ENCODE measurements at regions of chr17 and their contacts with region 1.

Region 1: DNA sequence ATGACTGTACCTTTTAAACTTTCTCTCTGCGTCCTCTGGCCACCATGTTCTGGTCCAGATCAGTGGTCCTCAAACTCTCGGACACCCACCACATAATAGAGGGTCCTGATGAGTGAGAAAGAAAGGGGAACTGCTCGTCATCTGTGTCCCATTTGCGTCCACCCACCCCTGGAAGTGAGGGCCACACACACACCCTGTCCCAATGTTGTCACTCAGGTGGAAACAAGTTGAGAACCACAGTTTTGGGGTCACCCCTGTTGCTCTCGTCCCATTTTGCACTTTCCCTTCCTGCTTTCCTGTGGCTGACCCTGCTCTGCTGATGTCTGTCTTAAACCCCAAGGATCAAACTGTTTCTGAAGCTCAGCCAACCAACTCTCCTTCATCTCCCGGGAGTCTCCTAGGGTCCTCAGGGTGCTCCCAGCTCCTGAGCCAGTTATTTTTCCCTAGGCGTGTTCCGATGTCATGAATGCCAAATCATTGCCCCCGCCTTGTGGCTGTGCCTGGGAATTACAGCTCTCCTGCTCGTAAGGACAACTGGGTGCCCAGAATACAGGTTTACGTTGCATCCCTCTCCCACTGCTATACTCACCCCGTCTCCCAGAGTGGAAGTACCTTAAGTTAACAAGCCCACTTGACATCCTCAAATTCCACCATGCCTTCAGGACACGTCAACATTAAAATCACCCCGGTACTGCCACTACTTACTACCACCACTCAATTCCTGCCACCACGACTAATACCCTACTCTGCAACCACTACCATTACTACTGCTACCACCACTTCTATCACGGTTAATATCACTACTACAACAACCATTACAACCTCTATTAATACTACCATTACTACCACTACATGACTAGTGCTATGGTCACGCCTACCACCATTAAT is 26.0 kb upstream of the HNF1B start:
- DNase-seq: peak; percentile 79 to 82
- ATAC-seq: peak; percentile 89 to 92
- H3K4me3 ChIP-seq: no peak overlapping the region
- H3K27ac ChIP-seq: peak overlapping the region; percentile 32 to 56; a peak in 5 of 6 replicates
- H3K4me1 ChIP-seq: peaks cover 4% of the 10 kb centered on the region; the same call in 2 of the 3 replicates
- CTCF ChIP-seq: peak; percentile 87
- EP300 ChIP-seq: no peak
- POLR2A ChIP-seq: no peak
- RAD21 ChIP-seq: peak; percentile 93 to 97

Region 2: GRCh38 chr17:37339321-37339720 is 431.6 kb before region 1 on chr17:
- CTCF ChIA-PET with region 1: no interaction called
- POLR2A ChIA-PET with region 1: no interaction called
- DNase-seq: no peak
- ATAC-seq: peak; percentile 40 to 47; a peak in 3 of 6 replicates
- H3K4me3 ChIP-seq: no peak overlapping the region
- H3K27ac ChIP-seq: no peak overlapping the region; a peak in 1 of 6 replicates
- H3K4me1 ChIP-seq: peaks cover 17% of the 10 kb centered on the region
- CTCF ChIP-seq: no peak
- EP300 ChIP-seq: no peak
- POLR2A ChIP-seq: no peak
- RAD21 ChIP-seq: no peak

Region 3: GRCh38 chr17:37701496-37701898 is 69.4 kb before region 1 on chr17:
- CTCF ChIA-PET with region 1: interaction called, 45 read pairs
- POLR2A ChIA-PET with region 1: no interaction called
- DNase-seq: peak; percentile 50 to 75
- ATAC-seq: peak; percentile 67 to 84; a peak in 5 of 6 replicates
- H3K4me3 ChIP-seq: no peak overlapping the region
- H3K27ac ChIP-seq: peak overlapping the region; percentile 72 to 78
- H3K4me1 ChIP-seq: peaks cover 48% of the 10 kb centered on the region
- CTCF ChIP-seq: peak; percentile 94
- EP300 ChIP-seq: no peak
- POLR2A ChIP-seq: no peak
- RAD21 ChIP-seq: peak; percentile 82 to 85

Region 4: GRCh38 chr17:37737081-37737480 is 33.8 kb before region 1 on chr17:
- CTCF ChIA-PET with region 1: interaction called, 20 read pairs
- POLR2A ChIA-PET with region 1: no interaction called
- DNase-seq: peak; percentile 41 to 73
- ATAC-seq: peak; percentile 38 to 52; a peak in 3 of 6 replicates
- H3K4me3 ChIP-seq: no peak overlapping the region
- H3K27ac ChIP-seq: peak overlapping the region in 1 of 2 experiments; percentile 37; a peak in 2 of 6 replicates
- H3K4me1 ChIP-seq: peaks cover 44% of the 10 kb centered on the region
- CTCF ChIP-seq: peak; percentile 65
- EP300 ChIP-seq: no peak
- POLR2A ChIP-seq: no peak
- RAD21 ChIP-seq: peak; percentile 63 to 73

Region 5: DNA sequence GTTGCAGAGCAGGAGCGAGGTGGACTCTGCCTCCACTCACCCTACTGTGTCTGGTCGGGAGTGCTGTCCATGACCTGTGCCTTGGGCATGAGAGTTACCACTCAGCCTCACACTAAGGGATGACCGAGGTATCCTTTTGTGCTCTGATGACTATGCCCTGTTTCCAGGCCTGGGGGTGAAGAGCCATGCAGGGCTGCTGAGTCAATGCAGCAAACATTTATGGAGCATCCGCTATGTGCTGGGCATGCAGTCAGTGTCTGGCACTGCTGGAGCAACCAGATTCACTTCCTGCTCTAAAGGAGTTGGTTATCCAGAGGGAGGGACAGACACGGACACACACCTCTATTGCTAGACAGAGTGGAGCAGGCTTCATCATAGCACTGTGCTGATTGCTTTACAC is 18.4 kb before region 1 on chr17:
- CTCF ChIA-PET with region 1: interaction called, 69 read pairs
- POLR2A ChIA-PET with region 1: no interaction called
- DNase-seq: peak; percentile 80 to 85
- ATAC-seq: peak; percentile 91 to 92
- H3K4me3 ChIP-seq: no peak overlapping the region
- H3K27ac ChIP-seq: peak overlapping the region; percentile 65 to 78
- H3K4me1 ChIP-seq: peaks cover 39% of the 10 kb centered on the region
- CTCF ChIP-seq: no peak
- EP300 ChIP-seq: no peak
- POLR2A ChIP-seq: no peak
- RAD21 ChIP-seq: no peak

Region 6: DNA sequence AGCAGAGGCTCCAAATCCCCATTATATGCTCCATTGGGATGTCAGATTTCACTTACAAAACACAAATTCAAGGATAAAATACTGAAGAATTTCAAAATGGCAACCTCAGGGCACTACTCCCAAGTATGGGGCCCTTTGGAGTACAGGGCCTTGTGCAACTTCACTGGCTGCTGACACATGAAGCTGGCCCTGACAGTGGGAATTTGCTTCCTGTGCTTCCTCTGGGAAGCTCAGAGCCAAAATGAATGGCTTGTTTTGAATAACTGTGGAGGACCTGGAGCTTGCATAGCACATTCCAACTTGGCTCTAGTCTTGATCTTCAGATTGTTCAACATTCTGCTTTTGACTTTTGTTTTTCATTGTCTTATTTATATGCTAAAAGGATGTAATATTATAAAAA is 26.3 kb after region 1 on chr17:
- CTCF ChIA-PET with region 1: interaction called, 57 read pairs
- POLR2A ChIA-PET with region 1: no interaction called
- DNase-seq: no peak
- ATAC-seq: no peak
- H3K4me3 ChIP-seq: no peak overlapping the region
- H3K27ac ChIP-seq: no peak overlapping the region
- H3K4me1 ChIP-seq: peaks cover 3% of the 10 kb centered on the region; the same call in 1 of the 3 replicates
- CTCF ChIP-seq: no peak
- EP300 ChIP-seq: no peak
- POLR2A ChIP-seq: no peak
- RAD21 ChIP-seq: no peak

Measured in A549 (cell line).